Calu3 (cell line): ENCODE measurements at regions of chr3 and their contacts with region 1.

Region 1: GRCh38 chr3:82707035-82707434 is 945.6 kb upstream of the GBE1 start:
- DNase-seq: peak; percentile 12
- H3K4me3 Mint-ChIP-seq: no peak overlapping the region
- H3K27ac Mint-ChIP-seq: no peak overlapping the region
- H3K4me1 Mint-ChIP-seq: no peaks in the 10 kb centered on the region
- H3K27me3 Mint-ChIP-seq: no peaks in the 10 kb centered on the region
- CTCF ChIP-seq: no peak

Region 2: GRCh38 chr3:82643948-82644347 is 63.1 kb before region 1 on chr3:
- CTCF ChIA-PET with region 1: no interaction called
- intact Hi-C with region 1: loop called (anchors 1 kb)
- DNase-seq: peak; percentile 41
- H3K4me3 Mint-ChIP-seq: no peak overlapping the region
- H3K27ac Mint-ChIP-seq: no peak overlapping the region
- H3K4me1 Mint-ChIP-seq: peaks cover 5% of the 10 kb centered on the region
- H3K27me3 Mint-ChIP-seq: no peaks in the 10 kb centered on the region
- CTCF ChIP-seq: no peak